HCT116 (cell line): ENCODE measurements at regions of chr11 and their contacts with region 1.

Region 1: GRCh38 chr11:126647735-126648134 is 292.2 kb downstream of the ST3GAL4 start:
- DNase-seq: peak; percentile 2
- ATAC-seq: peak; percentile 63
- H3K4me3 ChIP-seq: no peak overlapping the region
- H3K27ac ChIP-seq: no peak overlapping the region
- H3K4me1 ChIP-seq: peaks cover 0 to 7% of the 10 kb centered on the region in 2 experiments; a peak in 1 of 4 replicates
- H3K27me3 ChIP-seq: peaks cover 19% of the 10 kb centered on the region; the same call in 1 of the 2 replicates
- CTCF ChIP-seq: no peak
- POLR2A ChIP-seq: no peak
- RAD21 ChIP-seq: no peak

Region 2: GRCh38 chr11:126231725-126232459 is 415.8 kb before region 1 on chr11:
- CTCF ChIA-PET with region 1: no interaction called
- POLR2A ChIA-PET with region 1: no interaction called
- RAD21 ChIA-PET with region 1: no interaction called
- intact Hi-C with region 1: no loop called
- DNase-seq: no peak
- ATAC-seq: no peak
- H3K4me3 ChIP-seq: no peak overlapping the region
- H3K27ac ChIP-seq: no peak overlapping the region
- H3K4me1 ChIP-seq: no peaks in the 10 kb centered on the region
- H3K27me3 ChIP-seq: no peaks in the 10 kb centered on the region
- CTCF ChIP-seq: no peak
- POLR2A ChIP-seq: no peak
- RAD21 ChIP-seq: no peak

Region 3: GRCh38 chr11:126630893-126631798 is 16.6 kb before region 1 on chr11:
- CTCF ChIA-PET with region 1: no interaction called
- POLR2A ChIA-PET with region 1: no interaction called
- RAD21 ChIA-PET with region 1: no interaction called
- intact Hi-C with region 1: loop called (anchors 2 kb)
- DNase-seq: no peak
- ATAC-seq: no peak
- H3K4me3 ChIP-seq: no peak overlapping the region
- H3K27ac ChIP-seq: no peak overlapping the region
- H3K4me1 ChIP-seq: no peaks in the 10 kb centered on the region
- H3K27me3 ChIP-seq: peaks cover 57% of the 10 kb centered on the region; the same call in 1 of the 2 replicates
- CTCF ChIP-seq: no peak
- POLR2A ChIP-seq: no peak
- RAD21 ChIP-seq: no peak

Region 4: GRCh38 chr11:126698576-126698975 is 50.8 kb after region 1 on chr11:
- CTCF ChIA-PET with region 1: no interaction called
- POLR2A ChIA-PET with region 1: no interaction called
- RAD21 ChIA-PET with region 1: no interaction called
- intact Hi-C with region 1: no loop called
- DNase-seq: no peak
- ATAC-seq: no peak
- H3K4me3 ChIP-seq: no peak overlapping the region
- H3K27ac ChIP-seq: no peak overlapping the region
- H3K4me1 ChIP-seq: no peaks in the 10 kb centered on the region
- H3K27me3 ChIP-seq: peaks cover 37% of the 10 kb centered on the region; the same call in 1 of the 2 replicates
- CTCF ChIP-seq: no peak
- POLR2A ChIP-seq: no peak
- RAD21 ChIP-seq: no peak